Activated T-helper 1 cell treated with anti-CD3 and anti-CD28 coated beads, Interleukin-12 subunit alpha, Interleukin-12 subunit beta, Interleukin-2, Interleukin-4 antibody, amounts not matched to agents 30 ng/mL and 10 ng/mL and 1 ng/mL, durations not matched to agents 14 hours and 24 hours and 36 hours (primary cell): ENCODE measurements at regions of chr10 and their contacts with region 1.

Region 1: DNA sequence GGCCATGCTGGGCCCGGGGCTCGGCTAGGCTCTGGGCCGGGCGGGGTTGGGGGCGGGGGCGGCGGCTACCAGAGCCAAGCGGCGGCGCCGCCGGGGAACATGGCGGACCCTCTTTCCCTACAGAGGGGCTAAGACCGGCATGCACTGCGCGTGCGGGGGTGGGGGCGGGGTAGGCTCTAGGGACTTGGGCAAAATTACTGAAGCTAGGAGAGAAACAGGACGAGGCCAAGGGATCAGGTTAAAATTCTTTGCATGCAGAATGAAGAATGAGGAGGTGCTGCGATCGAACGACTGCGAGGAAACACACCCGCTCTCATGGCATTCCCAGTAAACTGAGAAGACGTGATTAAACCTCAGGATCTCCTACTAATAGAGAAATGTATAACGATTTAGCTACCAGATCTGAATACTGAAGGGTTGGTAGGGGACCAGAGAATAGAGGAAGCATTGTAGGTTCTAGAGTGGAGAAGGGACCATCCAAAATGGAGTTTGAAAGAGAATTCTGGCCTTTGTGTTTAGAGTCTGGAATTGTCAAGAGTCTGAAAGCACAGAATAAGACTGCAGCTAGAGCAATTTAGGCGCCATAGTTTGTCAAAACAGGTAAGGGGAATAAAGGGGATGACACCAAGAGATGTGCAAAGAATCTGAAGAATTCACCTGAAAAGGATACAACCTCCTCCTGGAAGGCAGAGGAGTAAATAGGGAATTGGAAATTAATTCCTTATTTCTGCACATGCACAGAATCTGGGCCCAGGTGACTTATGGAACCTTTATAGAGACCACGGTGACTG is at the start of gene PPP3CB:
- DNase-seq: peak; percentile 77
- H3K4me3 Mint-ChIP-seq: peak within 1 kb of the TSS; percentile 100
- H3K27ac Mint-ChIP-seq: peak within 1 kb of the TSS; percentile 98
- H3K4me1 Mint-ChIP-seq: peaks cover 43% of the 10 kb centered on the region
- H3K27me3 Mint-ChIP-seq: no peaks in the 10 kb centered on the region
- total RNA-seq, gene PPP3CB: 43.6 and 43.9 TPM in 2 replicates

Region 2: GRCh38 chr10:72625608-72626443 is 870.3 kb before region 1 on chr10 and contains the start of gene MICU1:
- intact Hi-C with region 1: loop called (anchors 10 kb)
- DNase-seq: peak; percentile 93
- H3K4me3 Mint-ChIP-seq: peak within 1 kb of the TSS; percentile 96
- H3K27ac Mint-ChIP-seq: peak within 1 kb of the TSS; percentile 94
- H3K4me1 Mint-ChIP-seq: peaks cover 13% of the 10 kb centered on the region
- H3K27me3 Mint-ChIP-seq: peaks cover 6% of the 10 kb centered on the region
- total RNA-seq, gene MICU1: 28.4 and 29.5 TPM in 2 replicates

Region 3: GRCh38 chr10:73246783-73247508 is 249.1 kb before region 1 on chr10 and contains the start of gene DNAJC9:
- intact Hi-C with region 1: loop called (anchors 1 kb)
- DNase-seq: peak; percentile 96
- H3K4me3 Mint-ChIP-seq: peak within 1 kb of the TSS; percentile 97
- H3K27ac Mint-ChIP-seq: peak within 1 kb of the TSS; percentile 95
- H3K4me1 Mint-ChIP-seq: peaks cover 67% of the 10 kb centered on the region
- H3K27me3 Mint-ChIP-seq: no peaks in the 10 kb centered on the region
- total RNA-seq, gene DNAJC9: 55.4 and 55.5 TPM in 2 replicates

Region 4: GRCh38 chr10:73263948-73264347 is 232.1 kb before region 1 on chr10:
- intact Hi-C with region 1: no loop called
- DNase-seq: no peak
- H3K4me3 Mint-ChIP-seq: no peak overlapping the region
- H3K27ac Mint-ChIP-seq: no peak overlapping the region
- H3K4me1 Mint-ChIP-seq: peaks cover 10% of the 10 kb centered on the region
- H3K27me3 Mint-ChIP-seq: peaks cover 15% of the 10 kb centered on the region

Region 5: DNA sequence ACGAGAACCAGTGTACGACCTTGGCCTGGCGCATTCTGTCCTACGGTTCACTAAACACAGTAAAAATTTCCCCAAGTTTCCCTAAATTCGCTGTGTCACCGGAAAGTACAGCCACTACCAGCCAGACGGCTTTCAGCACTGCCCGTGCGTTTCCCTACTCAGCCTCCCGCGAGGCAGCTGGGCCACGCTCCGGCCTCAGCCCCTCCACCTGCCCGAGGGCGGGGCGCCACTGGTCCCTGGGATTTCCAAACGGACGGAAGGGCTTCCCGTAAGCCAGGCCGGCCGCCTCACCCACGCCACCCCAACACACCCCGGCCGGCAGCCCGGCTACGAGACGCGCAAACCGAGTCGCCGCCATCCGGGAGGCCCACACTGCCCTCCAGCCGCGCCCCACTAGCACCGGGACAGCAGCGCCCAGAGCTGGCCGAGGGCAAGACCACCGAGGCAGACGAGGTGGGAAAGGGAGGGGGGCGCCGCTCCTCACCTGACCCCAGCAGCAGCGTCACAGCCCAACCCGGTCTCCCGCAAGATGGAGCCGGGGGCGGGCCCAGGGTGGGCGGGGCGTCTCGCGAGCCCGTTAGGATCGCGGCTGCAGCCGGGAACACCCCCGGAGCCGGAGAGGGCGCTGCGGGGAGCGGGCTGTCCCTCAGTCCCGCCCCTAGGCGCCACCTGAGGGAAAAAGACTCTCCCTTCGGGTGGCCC is 82.4 kb before region 1 on chr10 and contains the start of gene ANXA7:
- intact Hi-C with region 1: loop called (anchors 1 kb)
- DNase-seq: peak; percentile 89
- H3K4me3 Mint-ChIP-seq: peak within 1 kb of the TSS; percentile 92
- H3K27ac Mint-ChIP-seq: peak within 1 kb of the TSS; percentile 90
- H3K4me1 Mint-ChIP-seq: peaks cover 45% of the 10 kb centered on the region
- H3K27me3 Mint-ChIP-seq: no peaks in the 10 kb centered on the region
- total RNA-seq, gene ANXA7: 152 and 157 TPM in 2 replicates

Region 6: DNA sequence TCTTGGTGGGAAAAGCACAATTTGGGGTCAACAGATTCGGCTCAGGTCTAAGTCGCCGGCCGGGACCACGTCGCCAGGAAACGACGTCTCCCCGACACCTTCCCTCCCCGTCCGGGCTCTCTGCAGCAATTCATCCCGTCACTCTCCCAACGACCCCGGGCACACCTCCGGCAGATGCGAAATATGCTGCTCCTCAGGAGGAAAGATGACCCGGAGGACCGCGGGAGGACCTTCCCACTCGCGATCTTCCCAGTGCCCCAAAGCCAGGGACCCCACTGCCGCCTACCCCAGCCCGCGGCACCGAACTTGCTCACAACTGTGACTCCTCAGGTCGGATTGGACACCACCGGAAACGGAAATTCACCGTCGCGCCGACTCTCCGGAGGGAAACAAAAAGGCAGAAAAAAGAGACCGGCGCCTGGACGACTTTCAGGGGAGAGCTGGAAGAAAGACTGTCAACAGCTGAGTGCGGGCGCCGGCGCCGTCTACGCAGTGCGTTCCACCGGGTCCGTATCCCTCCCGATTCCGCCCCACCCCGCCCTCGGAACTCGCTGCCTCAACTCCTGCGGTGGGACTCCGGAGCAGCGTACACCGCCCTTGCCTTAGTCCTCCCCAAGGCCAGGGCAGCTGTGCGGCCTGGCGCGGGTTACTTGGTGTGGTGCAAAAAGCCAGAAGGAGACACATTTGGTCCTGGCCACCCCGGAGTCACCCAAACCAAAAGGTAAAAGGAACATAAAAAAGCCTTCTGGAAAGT is 234.3 kb after region 1 on chr10:
- intact Hi-C with region 1: loop called (anchors 1 kb)
- DNase-seq: peak; percentile 92
- H3K4me3 Mint-ChIP-seq: peak overlapping the region; percentile 95
- H3K27ac Mint-ChIP-seq: peak overlapping the region; percentile 97
- H3K4me1 Mint-ChIP-seq: peaks cover 10% of the 10 kb centered on the region
- H3K27me3 Mint-ChIP-seq: peaks cover 2% of the 10 kb centered on the region

Region 7: DNA sequence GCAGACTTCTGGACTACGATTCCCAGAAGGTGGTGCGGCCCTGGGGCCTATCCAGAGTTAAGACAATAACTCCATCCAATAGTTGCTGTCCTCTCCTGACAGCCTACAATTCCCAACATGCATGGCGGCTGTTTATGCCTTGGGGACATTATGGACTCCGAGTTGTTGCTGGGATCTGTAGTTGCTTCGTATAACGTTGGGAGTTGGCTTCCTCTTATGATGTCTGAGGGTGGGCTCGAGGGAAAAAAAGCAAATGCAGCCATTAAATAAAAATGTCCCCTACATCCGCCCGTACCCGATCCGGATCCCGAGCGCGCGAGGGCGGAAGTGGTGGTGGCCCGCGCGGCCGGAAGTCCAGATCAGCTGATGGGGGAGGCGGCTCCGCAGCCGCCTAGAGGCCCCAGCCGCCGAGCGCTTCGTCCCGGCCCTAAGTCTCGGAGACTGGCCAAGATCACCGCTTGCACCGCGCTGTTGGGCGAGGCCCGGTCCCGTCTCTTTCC is 289.2 kb after region 1 on chr10 and contains the start of gene ZSWIM8:
- intact Hi-C with region 1: loop called (anchors 1 kb)
- DNase-seq: peak; percentile 79
- H3K4me3 Mint-ChIP-seq: peak within 1 kb of the TSS; percentile 99
- H3K27ac Mint-ChIP-seq: peak within 1 kb of the TSS; percentile 87
- H3K4me1 Mint-ChIP-seq: peaks cover 48% of the 10 kb centered on the region
- H3K27me3 Mint-ChIP-seq: no peaks in the 10 kb centered on the region
- total RNA-seq, gene ZSWIM8: 54.2 and 56.3 TPM in 2 replicates